Activated B cell treated with CpG ODN at 0.5 μM for 24 hours (primary cell): ENCODE measurements at regions of chr1 and their contacts with region 1.

Region 1: GRCh38 chr1:172380441-172381244 is 39.8 kb upstream of the C1orf105 start:
- DNase-seq: no peak
- ATAC-seq: peak; percentile 95
- H3K4me3 Mint-ChIP-seq: peak overlapping the region; percentile 67
- H3K27ac Mint-ChIP-seq: peak overlapping the region; percentile 94
- H3K4me1 Mint-ChIP-seq: peaks cover 58% of the 10 kb centered on the region
- H3K27me3 Mint-ChIP-seq: no peaks in the 10 kb centered on the region
- CTCF ChIP-seq: no peak

Region 2: DNA sequence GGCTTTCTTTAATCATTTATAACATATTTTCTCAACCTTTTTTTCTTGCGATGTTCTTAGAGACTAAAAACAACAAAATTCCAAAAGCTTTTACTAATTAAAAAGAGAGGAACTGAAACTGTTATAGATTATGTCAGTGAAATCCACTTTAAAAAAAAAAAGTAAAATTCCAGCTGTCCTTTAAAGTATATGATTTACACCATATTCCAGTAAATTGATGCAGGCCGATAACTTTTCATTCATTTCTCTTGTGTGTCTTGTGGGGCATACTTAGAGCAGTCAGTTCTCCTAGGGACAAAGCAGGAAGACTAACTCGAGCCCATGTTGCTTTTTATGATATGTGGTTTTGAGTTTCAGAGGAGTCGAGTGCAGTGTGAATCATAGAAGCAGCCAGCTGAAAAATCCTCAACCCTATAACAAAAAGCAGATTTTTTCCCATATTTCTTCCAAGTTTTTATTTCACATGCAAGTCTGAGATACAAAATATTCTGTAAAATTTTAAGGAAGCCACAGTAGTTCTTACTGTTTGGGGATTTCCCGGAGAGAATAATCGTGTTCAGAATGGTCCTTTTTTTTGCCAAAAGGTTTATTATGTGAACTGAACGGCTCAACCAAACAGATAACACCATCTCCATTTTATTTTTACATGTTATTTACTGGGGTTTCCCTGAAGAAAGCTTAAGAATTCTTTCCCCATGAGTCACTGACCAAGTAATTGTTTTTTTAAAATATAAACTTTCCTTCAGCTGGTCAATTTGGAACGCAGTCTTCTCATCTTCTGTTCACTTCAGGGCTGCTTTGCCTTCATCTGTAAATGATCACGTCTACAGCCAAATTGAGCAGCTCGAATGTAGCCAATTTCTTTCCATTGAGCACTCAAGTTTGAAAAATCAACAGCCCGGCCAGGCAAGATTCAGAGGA is 37.1 kb before region 1 on chr1:
- CTCF ChIA-PET with region 1: interaction called, 4 read pairs
- POLR2A ChIA-PET with region 1: interaction called, 10 read pairs
- intact Hi-C with region 1: loop called (anchors 2 kb)
- DNase-seq: no peak
- ATAC-seq: peak; percentile 61
- H3K4me3 Mint-ChIP-seq: peak overlapping the region; percentile 66
- H3K27ac Mint-ChIP-seq: peak overlapping the region; percentile 84
- H3K4me1 Mint-ChIP-seq: peaks cover 69% of the 10 kb centered on the region
- H3K27me3 Mint-ChIP-seq: no peaks in the 10 kb centered on the region
- CTCF ChIP-seq: no peak

Region 3: GRCh38 chr1:172357753-172358385 is 22.8 kb before region 1 on chr1:
- CTCF ChIA-PET with region 1: interaction called, 4 read pairs
- POLR2A ChIA-PET with region 1: interaction called, 103 read pairs
- intact Hi-C with region 1: loop called (anchors 1 kb)
- DNase-seq: no peak
- ATAC-seq: peak; percentile 10
- H3K4me3 Mint-ChIP-seq: peak overlapping the region; percentile 58
- H3K27ac Mint-ChIP-seq: peak overlapping the region; percentile 91
- H3K4me1 Mint-ChIP-seq: peaks cover 53% of the 10 kb centered on the region
- H3K27me3 Mint-ChIP-seq: no peaks in the 10 kb centered on the region
- CTCF ChIP-seq: no peak

Region 4: DNA sequence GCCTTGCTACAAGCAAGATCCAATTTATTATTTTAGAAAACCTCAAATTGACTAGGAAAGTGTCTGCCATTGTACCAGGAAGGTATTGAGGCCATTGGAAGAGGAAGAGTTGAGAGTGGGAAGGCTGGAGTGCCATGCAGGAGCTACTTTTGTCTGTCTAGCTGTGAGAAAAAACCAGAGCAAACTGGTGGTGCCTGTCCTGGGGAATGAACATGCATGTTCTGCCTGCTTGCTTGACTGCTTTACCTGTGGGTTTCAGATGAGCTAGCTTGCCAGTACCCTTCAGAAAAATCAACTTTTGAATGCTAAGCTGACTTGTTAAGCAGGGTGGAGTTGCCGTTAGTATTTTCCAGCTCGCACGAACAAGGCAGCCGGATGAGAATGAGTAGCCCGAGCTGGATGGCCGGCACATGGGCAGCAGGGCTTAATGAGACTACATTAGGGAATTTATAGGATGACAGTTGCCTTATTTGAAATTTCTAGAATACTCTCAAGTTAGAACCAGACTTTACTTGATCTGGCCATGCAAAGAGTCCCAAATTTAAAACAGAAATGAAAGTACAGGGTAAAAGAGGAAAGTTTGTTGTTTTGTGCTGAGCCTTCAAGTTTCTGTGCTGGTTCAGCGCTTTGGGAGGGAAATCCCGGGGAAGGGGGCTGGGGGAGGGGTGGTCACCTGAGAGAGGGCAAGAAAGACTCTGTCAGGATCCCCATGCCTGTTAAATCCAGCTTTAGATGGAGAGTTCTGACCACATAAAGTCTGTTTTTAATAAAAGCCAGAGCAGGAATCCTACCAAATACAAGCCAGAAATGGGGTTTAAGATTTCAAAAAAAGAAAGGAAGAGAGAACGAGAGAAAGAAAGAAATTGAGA is 10.3 kb after region 1 on chr1:
- CTCF ChIA-PET with region 1: interaction called, 4 read pairs
- POLR2A ChIA-PET with region 1: interaction called, 248 read pairs
- intact Hi-C with region 1: loop called (anchors 1 kb)
- DNase-seq: peak; percentile 36
- ATAC-seq: peak; percentile 76
- H3K4me3 Mint-ChIP-seq: peak overlapping the region; percentile 88
- H3K27ac Mint-ChIP-seq: peak overlapping the region; percentile 99
- H3K4me1 Mint-ChIP-seq: peaks cover 64% of the 10 kb centered on the region
- H3K27me3 Mint-ChIP-seq: no peaks in the 10 kb centered on the region
- CTCF ChIP-seq: no peak